SK-N-SH (cell line): ENCODE measurements at regions of chr12 and their contacts with region 1.

Region 1: GRCh38 chr12:69919495-69919894 is 94.5 kb downstream of the MYRFL start:
- DNase-seq: no peak
- H3K4me3 ChIP-seq: no peak overlapping the region
- H3K27ac ChIP-seq: no peak overlapping the region
- H3K4me1 ChIP-seq: no peaks in the 10 kb centered on the region; a peak in 1 of 4 replicates
- H3K27me3 ChIP-seq: no peaks in the 10 kb centered on the region
- CTCF ChIP-seq: no peak
- EP300 ChIP-seq: no peak
- RAD21 ChIP-seq: no peak

Region 2: GRCh38 chr12:69906411-69907216 is 12.9 kb before region 1 on chr12:
- CTCF ChIA-PET with region 1: interaction called, 16 read pairs
- POLR2A ChIA-PET with region 1: no interaction called
- DNase-seq: no peak
- H3K4me3 ChIP-seq: no peak overlapping the region
- H3K27ac ChIP-seq: no peak overlapping the region
- H3K4me1 ChIP-seq: peaks cover 4 to 11% of the 10 kb centered on the region in 2 experiments; a peak in 2 of 4 replicates
- H3K27me3 ChIP-seq: no peaks in the 10 kb centered on the region
- CTCF ChIP-seq: no peak
- EP300 ChIP-seq: no peak
- RAD21 ChIP-seq: no peak